B cell (primary cell): ENCODE measurements at regions of chr15 and their contacts with region 1.

Region 1: DNA sequence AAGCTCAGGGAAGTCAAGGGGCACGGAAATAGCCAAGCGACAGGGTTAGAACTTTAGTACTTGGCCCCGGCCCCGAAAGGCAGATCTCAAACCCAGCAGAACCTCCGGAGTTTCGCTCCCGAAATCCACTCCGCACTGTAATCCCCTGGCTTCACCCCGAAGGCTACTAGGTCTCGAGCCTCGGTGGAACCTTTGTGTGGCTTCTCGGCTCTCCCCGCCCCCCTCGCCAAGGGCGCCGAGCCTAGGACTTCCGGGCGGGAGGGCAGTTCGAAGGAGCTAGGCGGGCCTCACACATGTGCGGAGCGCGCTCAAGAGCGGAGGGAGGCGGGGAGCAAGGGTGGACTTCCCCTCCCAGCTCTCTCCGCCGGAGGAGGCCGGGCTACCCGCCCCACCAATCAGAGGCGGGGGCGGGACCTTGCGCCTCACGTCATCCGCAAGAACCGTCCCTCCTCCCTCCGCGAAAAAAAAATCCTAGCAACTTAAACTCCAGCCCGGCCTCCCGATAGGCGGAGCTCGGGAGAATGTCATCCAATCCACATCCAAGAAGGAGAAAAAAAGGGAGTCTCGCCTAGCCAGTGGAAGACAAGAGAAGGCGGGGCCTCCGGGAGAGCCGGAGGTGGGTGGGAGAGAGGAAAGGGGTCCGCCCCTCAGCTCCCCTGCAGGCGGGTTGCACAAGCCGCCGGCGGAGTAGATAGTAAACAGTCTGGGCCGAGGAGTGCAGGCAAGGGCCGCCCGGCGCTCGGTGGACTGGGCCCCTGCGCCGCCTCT is 2.4 kb upstream of the SIN3A start:
- DNase-seq: peak; percentile 99
- ATAC-seq: peak; percentile 40
- H3K4me3 ChIP-seq: peak overlapping the region; percentile 95 to 99 (median 97)
- H3K4me3 Mint-ChIP-seq: peak overlapping the region; percentile 98
- H3K27ac ChIP-seq: peak overlapping the region; percentile 90 to 95
- H3K27ac Mint-ChIP-seq: peak overlapping the region; percentile 99
- H3K4me1 ChIP-seq: peaks cover 21 to 37% of the 10 kb centered on the region in 2 donors
- H3K4me1 Mint-ChIP-seq: peaks cover 41% of the 10 kb centered on the region
- H3K27me3 ChIP-seq: no peaks in the 10 kb centered on the region
- H3K27me3 Mint-ChIP-seq: no peaks in the 10 kb centered on the region
- CTCF ChIP-seq: no peak

Region 2: GRCh38 chr15:74787251-74788041 is 666.4 kb before region 1 on chr15:
- CTCF ChIA-PET with region 1: interaction called, 4 read pairs
- POLR2A ChIA-PET with region 1: interaction called, 3 read pairs
- intact Hi-C with region 1: loop called (anchors 5 kb)
- DNase-seq: peak; percentile 98
- ATAC-seq: peak; percentile 57
- H3K4me3 ChIP-seq: peak overlapping the region; percentile 67 to 99 (median 86)
- H3K4me3 Mint-ChIP-seq: peak overlapping the region; percentile 93
- H3K27ac ChIP-seq: peak overlapping the region; percentile 90 to 93
- H3K27ac Mint-ChIP-seq: peak overlapping the region; percentile 99
- H3K4me1 ChIP-seq: peaks cover 61 to 91% of the 10 kb centered on the region in 2 donors
- H3K4me1 Mint-ChIP-seq: peaks cover 94% of the 10 kb centered on the region
- H3K27me3 ChIP-seq: no peaks in the 10 kb centered on the region
- H3K27me3 Mint-ChIP-seq: no peaks in the 10 kb centered on the region
- CTCF ChIP-seq: peak; percentile 75

Region 3: DNA sequence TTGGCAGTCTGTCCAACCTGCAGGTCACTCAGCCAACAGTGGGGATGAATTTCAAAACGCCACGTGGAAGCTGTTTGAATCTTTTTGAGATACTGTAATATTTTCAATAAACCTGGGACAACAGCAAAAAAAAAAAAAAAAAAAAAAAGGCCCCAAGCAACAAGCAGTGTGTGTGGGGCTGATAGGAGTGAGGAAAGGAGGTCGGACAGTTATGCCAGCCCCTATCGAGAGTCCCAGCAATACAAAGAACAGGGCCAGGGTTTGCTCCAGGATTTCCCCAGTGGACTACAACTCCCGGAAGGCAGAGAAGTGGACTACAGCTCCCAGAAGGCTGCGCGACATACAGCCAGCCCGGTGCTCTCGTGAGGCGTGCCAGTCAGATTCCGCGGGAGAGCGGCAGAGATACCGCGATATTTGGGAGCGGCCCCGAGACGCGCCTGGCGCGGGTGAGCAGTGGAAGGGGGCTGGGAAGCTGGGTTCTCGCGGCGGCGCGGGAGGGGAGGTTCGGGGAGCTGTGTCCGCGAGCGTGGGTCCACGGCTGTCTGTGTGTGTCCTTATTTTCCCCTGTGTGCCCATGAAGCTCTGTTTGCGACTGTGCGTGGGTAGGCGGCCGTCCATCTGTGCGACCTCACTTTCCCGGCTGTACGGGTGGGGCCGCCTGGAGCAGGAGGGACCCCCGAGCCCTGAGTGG is 430.6 kb before region 1 on chr15 and contains the start of gene PPCDC:
- CTCF ChIA-PET with region 1: no interaction called
- POLR2A ChIA-PET with region 1: no interaction called
- intact Hi-C with region 1: loop called (anchors 5 kb)
- DNase-seq: peak; percentile 93
- ATAC-seq: peak; percentile 100
- H3K4me3 ChIP-seq: peak within 1 kb of the TSS; percentile 72 to 96 (median 94)
- H3K4me3 Mint-ChIP-seq: peak within 1 kb of the TSS; percentile 97
- H3K27ac ChIP-seq: peak within 1 kb of the TSS; percentile 49 to 72
- H3K27ac Mint-ChIP-seq: peak within 1 kb of the TSS; percentile 94
- H3K4me1 ChIP-seq: peaks cover 5 to 18% of the 10 kb centered on the region in 2 donors
- H3K4me1 Mint-ChIP-seq: peaks cover 14% of the 10 kb centered on the region
- H3K27me3 ChIP-seq: peaks cover 0 to 33% (median 15%) of the 10 kb centered on the region in 4 experiments
- H3K27me3 Mint-ChIP-seq: peaks cover 23% of the 10 kb centered on the region
- CTCF ChIP-seq: no peak
- total RNA-seq, gene PPCDC: 14.8 and 15.1 TPM in 2 replicates

Region 4: DNA sequence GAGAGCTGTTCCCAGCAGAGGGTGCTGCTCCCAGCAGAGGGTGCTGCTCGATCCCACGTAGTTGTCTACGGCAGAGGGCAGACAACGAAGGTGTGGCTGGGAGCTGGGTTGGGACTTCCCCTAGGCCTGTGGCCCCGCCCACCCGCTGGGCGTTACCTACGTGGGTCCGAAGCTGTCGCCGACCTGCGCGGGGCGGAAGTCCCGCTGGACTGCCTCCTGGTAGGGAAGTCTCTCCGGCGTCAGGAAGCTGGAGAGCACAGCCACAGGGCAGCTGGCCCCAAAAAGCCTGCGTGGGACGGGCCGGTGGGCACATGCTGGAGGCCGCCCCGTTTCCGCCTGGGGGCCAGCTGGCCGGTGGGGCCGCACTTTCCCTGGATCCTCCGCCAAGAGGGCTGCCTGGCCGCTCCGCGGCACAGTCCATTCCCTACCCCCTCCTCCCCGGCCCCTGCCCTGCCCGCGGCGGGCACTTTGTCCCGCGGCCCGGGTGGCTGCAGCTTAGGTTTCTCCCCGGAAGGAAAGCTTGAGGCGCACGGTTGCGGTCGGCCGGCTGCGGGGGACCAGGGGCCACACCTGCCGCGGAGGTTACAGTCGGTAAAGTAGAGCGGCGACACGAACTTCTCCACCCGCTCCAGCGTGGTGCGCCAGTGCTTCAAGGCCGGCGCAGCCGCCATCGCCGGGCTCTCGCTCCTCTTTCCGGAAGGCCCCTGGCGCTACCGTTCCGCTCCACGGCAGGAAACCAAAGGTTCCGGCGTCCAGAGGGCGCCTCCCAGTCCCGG is 85.8 kb before region 1 on chr15 and contains the start of gene MAN2C1:
- CTCF ChIA-PET with region 1: interaction called, 51 read pairs
- POLR2A ChIA-PET with region 1: interaction called, 62 read pairs
- intact Hi-C with region 1: no loop called
- DNase-seq: peak; percentile 97
- ATAC-seq: peak; percentile 92
- H3K4me3 ChIP-seq: peak within 1 kb of the TSS; percentile 74 to 96 (median 87)
- H3K4me3 Mint-ChIP-seq: peak within 1 kb of the TSS; percentile 93
- H3K27ac ChIP-seq: peak within 1 kb of the TSS; percentile 98 to 99
- H3K27ac Mint-ChIP-seq: peak within 1 kb of the TSS; percentile 95
- H3K4me1 ChIP-seq: peaks cover 13 to 19% of the 10 kb centered on the region in 2 donors
- H3K4me1 Mint-ChIP-seq: peaks cover 27% of the 10 kb centered on the region
- H3K27me3 ChIP-seq: no peaks in the 10 kb centered on the region
- H3K27me3 Mint-ChIP-seq: no peaks in the 10 kb centered on the region
- CTCF ChIP-seq: peak; percentile 74
- total RNA-seq, gene MAN2C1: 227 and 229 TPM in 2 replicates

Region 5: GRCh38 chr15:75639709-75640482 is 186.0 kb after region 1 on chr15 and contains the start of gene IMP3:
- CTCF ChIA-PET with region 1: no interaction called
- POLR2A ChIA-PET with region 1: interaction called, 20 read pairs
- intact Hi-C with region 1: loop called (anchors 1 kb)
- DNase-seq: peak; percentile 96
- ATAC-seq: peak; percentile 93
- H3K4me3 ChIP-seq: peak within 1 kb of the TSS; percentile 72 to 91 (median 84)
- H3K4me3 Mint-ChIP-seq: peak within 1 kb of the TSS; percentile 95
- H3K27ac ChIP-seq: peak within 1 kb of the TSS; percentile 78 to 81
- H3K27ac Mint-ChIP-seq: peak within 1 kb of the TSS; percentile 96
- H3K4me1 ChIP-seq: peaks cover 29 to 36% of the 10 kb centered on the region in 2 donors
- H3K4me1 Mint-ChIP-seq: peaks cover 40% of the 10 kb centered on the region
- H3K27me3 ChIP-seq: peaks cover 0 to 4% (median 0%) of the 10 kb centered on the region in 4 experiments
- H3K27me3 Mint-ChIP-seq: no peaks in the 10 kb centered on the region
- CTCF ChIP-seq: no peak
- total RNA-seq, gene IMP3: 60.8 and 62.9 TPM in 2 replicates

Region 6: DNA sequence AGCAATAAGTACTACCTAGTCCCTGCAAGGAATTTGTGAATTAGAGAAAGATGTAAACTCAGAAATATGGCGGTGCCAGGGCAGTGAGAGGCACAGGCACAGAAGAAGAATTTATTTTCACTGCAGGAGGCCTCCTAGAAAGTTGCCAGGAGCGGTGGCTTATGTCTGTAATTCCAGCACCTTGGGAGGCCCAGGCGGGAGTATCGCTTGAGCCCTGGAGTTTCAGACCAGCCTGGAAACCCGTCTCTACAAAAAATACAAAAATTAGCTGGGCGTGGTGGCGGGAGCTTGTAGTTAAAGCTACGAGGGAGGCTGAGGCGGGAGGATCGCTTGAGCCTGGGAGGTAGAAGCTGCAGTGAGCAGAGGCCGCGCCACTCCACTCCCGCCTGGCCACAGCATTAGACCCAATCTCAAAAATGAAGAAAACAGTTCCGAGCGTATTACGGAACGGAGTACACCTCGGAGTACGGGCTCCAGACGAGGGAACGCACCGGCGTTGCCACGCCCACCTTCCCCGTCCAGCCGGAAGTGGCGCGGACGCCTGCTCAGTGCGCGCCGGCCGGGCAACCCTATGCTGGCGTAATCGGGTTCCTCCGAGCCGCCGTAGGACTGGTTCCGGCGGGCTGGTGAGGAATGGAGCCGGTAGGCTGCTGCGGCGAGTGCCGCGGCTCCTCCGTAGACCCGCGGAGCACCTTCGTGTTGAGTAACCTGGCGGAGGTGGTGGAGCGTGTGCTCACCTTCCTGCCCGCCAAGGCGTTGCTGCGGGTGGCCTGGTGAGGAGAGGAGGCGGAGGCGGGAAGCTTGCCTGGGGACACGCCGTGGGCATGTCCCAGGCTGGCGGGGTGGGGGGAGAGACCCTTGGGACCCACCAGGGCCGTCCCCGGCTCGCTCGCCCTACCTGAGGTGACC is 449.7 kb after region 1 on chr15 and contains the start of gene FBXO22:
- CTCF ChIA-PET with region 1: no interaction called
- POLR2A ChIA-PET with region 1: no interaction called
- intact Hi-C with region 1: loop called (anchors 5 kb)
- DNase-seq: peak; percentile 93
- ATAC-seq: peak; percentile 97
- H3K4me3 ChIP-seq: peak within 1 kb of the TSS; percentile 78 to 97 (median 90)
- H3K4me3 Mint-ChIP-seq: peak within 1 kb of the TSS; percentile 100
- H3K27ac ChIP-seq: peak within 1 kb of the TSS; percentile 80 to 93
- H3K27ac Mint-ChIP-seq: peak within 1 kb of the TSS; percentile 97
- H3K4me1 ChIP-seq: peaks cover 12 to 13% of the 10 kb centered on the region in 2 donors
- H3K4me1 Mint-ChIP-seq: peaks cover 33% of the 10 kb centered on the region
- H3K27me3 ChIP-seq: no peaks in the 10 kb centered on the region
- H3K27me3 Mint-ChIP-seq: no peaks in the 10 kb centered on the region
- CTCF ChIP-seq: no peak
- total RNA-seq, gene FBXO22: 23.3 and 24.1 TPM in 2 replicates